ENCODE measurements at regions of chr10 and their contacts with region 1.

Region 1: GRCh38 chr10:33155720-33156638 is 178.5 kb downstream of the NRP1 start:
- DNase-seq: peak; percentile 53
- H3K4me3 Mint-ChIP-seq: no peak overlapping the region
- H3K27ac Mint-ChIP-seq: peak overlapping the region; percentile 59
- H3K4me1 Mint-ChIP-seq: peaks cover 53% of the 10 kb centered on the region
- H3K27me3 Mint-ChIP-seq: no peaks in the 10 kb centered on the region

Region 2: DNA sequence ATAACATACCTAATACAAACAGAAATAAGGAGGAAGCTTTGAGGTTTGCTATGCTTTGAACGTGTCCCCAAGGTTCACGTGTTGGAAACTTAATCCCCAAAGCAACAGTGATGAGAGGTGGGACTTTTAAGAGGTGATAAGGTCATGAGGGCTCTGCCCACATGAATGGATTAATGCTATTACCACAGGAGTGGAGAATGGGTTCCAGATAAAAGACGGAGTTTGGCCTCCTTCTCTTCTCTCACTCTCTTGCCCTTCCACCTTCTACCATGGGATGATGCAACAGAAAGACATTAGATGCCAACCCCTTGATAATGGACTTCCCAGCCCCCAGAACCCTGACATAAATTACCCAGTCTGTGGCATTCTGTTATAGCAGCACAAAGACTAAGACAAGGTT is 207.5 kb before region 1 on chr10:
- CTCF ChIA-PET with region 1: no interaction called
- POLR2A ChIA-PET with region 1: no interaction called
- DNase-seq: no peak
- H3K4me3 Mint-ChIP-seq: peak overlapping the region; percentile 5
- H3K27ac Mint-ChIP-seq: peak overlapping the region; percentile 4
- H3K4me1 Mint-ChIP-seq: peaks cover 75% of the 10 kb centered on the region
- H3K27me3 Mint-ChIP-seq: no peaks in the 10 kb centered on the region

Region 3: DNA sequence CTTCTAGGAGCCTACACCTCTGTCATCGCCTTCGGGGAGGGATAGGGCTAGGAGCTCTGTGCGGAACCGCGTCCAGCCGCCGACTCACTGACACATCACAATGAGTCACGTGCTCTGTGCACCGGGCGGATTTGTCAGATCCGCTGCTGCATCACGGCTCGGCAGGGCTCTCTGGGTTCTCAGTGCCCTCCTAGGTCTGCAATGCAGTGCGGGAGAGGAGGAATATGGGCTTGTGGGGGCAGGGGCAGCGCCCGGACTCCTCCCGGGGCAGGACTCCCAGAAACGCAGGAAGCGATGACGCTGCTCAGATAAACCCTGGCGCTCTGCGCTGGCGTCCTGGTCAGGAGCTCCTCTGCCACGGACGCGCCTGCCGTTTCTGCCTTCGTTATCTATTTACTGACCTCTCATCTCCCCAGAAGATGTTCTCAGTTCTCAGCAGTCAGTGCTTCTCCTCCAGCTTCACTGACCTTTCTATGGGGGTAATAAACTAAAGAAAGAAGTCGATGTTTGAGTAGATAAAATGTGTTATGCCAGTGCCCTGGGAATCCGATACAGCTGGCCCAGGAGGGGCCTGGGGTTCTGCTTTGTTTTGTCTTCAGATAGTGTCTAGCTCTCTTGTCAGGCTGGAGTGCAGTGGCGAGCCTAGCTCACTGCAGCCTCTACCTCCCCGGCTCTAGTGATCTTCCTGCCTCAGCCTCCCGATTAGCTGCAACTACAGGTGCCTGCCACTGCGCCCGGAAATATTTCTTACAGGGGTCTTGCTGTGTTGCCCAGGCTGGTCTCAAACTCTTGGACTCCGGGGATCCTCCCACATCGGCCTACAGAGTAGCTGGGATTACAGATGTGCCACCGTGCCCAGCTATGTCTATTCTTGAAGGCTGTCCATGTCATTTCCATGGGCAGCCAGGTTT is 175.2 kb before region 1 on chr10:
- CTCF ChIA-PET with region 1: interaction called, 12 read pairs
- POLR2A ChIA-PET with region 1: interaction called, 18 read pairs
- DNase-seq: peak; percentile 89
- H3K4me3 Mint-ChIP-seq: peak overlapping the region; percentile 88
- H3K27ac Mint-ChIP-seq: peak overlapping the region; percentile 93
- H3K4me1 Mint-ChIP-seq: peaks cover 42% of the 10 kb centered on the region
- H3K27me3 Mint-ChIP-seq: no peaks in the 10 kb centered on the region

Region 4: DNA sequence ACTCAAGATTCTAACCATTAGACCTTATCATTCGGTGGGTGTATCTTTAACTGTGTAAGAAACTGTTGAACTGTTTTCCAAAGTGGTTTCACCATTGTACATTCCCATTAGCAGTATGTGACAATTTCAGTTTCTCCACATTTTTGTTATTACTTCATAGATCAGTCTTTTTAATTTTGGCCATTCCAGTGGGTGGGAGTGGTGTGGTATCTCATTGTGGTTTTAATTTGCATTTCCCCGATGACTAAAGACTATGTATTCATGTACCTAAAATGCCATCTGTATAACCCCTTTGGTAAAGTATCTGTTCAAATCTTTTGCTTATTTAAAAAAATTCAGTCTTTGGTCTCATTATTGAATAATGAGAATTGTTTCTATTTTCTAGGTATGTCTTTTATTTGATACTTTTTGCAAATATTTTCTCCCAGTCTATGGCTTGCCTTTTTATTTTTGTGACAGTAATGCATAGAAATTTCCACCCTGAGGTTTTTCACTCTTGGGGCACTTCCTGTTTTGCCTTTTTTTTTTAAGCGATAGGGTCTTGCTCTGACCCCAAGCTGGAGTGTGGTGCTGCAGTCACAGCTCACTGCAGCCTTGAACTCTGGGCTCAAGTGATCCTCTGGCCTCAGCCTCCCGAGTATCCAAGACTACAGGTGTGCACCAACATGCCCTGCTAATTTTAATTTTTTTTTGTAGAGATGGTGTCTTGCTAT is 56.9 kb before region 1 on chr10:
- CTCF ChIA-PET with region 1: interaction called, 12 read pairs
- POLR2A ChIA-PET with region 1: interaction called, 20 read pairs
- DNase-seq: no peak
- H3K4me3 Mint-ChIP-seq: peak overlapping the region; percentile 11
- H3K27ac Mint-ChIP-seq: peak overlapping the region; percentile 89
- H3K4me1 Mint-ChIP-seq: peaks cover 66% of the 10 kb centered on the region
- H3K27me3 Mint-ChIP-seq: no peaks in the 10 kb centered on the region

Region 5: DNA sequence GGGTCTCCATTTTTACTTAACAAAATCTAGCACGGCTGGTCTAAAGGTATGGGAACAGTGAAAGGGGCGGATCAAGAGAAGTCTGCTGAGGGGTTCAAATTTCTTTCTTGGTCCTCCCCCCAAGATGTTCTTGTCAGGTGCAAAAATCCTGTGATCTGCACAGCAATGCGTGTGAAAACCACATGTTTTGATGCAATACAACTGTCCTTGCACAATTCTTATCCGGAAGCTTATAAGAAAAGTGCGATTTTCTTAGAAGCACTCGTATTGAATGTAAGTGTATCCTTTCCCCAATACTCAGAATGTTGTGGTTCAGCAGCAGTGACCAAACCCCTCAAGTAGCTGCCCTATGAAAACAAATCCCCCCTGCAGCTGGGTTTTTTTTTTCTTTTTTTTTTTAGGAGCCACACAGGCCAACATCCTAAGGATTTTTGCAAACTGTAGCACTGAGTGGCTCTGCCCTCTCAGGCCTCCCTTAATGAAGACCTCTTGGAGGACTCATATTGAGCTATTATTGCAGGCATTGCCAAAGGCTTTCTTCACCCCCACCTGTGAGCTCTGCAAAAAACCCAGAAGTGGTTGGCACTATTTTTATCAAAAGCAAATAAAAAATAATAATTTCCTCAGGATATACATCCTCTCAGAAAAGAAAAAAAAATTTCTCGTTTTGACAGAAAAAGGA is 46.0 kb before region 1 on chr10:
- CTCF ChIA-PET with region 1: interaction called, 43 read pairs
- POLR2A ChIA-PET with region 1: interaction called, 97 read pairs
- DNase-seq: peak; percentile 50
- H3K4me3 Mint-ChIP-seq: peak overlapping the region; percentile 59
- H3K27ac Mint-ChIP-seq: peak overlapping the region; percentile 84
- H3K4me1 Mint-ChIP-seq: peaks cover 95% of the 10 kb centered on the region
- H3K27me3 Mint-ChIP-seq: no peaks in the 10 kb centered on the region

Region 6: GRCh38 chr10:33125522-33126517 is 30.2 kb before region 1 on chr10:
- CTCF ChIA-PET with region 1: interaction called, 4 read pairs
- POLR2A ChIA-PET with region 1: interaction called, 97 read pairs
- DNase-seq: peak; percentile 62
- H3K4me3 Mint-ChIP-seq: peak overlapping the region; percentile 18
- H3K27ac Mint-ChIP-seq: peak overlapping the region; percentile 94
- H3K4me1 Mint-ChIP-seq: peaks cover 87% of the 10 kb centered on the region
- H3K27me3 Mint-ChIP-seq: no peaks in the 10 kb centered on the region

Region 7: GRCh38 chr10:33134011-33134751 is 21.8 kb before region 1 on chr10:
- CTCF ChIA-PET with region 1: interaction called, 16 read pairs
- POLR2A ChIA-PET with region 1: interaction called, 150 read pairs
- DNase-seq: peak; percentile 84
- H3K4me3 Mint-ChIP-seq: no peak overlapping the region
- H3K27ac Mint-ChIP-seq: peak overlapping the region; percentile 90
- H3K4me1 Mint-ChIP-seq: peaks cover 91% of the 10 kb centered on the region
- H3K27me3 Mint-ChIP-seq: no peaks in the 10 kb centered on the region

Region 8: DNA sequence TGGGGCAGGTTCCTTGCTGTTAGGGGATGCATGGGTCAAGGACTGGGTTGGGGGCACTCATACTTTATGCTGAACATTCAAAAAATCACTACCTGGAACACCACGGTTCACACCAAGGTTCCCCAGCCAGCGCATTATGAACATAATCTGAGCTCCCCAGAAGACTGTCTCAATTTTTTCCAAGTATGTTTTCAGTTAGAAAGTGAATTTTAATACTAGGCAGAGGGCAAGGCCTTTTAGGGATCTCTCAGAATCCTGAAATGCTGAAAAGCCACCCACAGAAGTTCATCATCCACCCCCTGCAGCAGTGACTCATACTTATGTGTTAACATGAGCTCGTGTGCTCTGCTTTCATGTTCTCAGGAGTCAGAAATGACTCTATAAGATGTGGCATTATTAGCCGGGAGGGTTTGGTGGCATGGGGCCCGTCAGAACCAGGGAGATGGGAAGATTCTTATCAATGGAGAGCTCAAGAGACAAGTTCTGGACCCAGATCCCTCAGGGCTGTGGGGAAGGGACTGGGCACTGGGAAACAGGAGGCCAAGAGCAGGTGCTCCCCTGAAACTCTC is 12.7 kb before region 1 on chr10:
- CTCF ChIA-PET with region 1: interaction called, 9 read pairs
- POLR2A ChIA-PET with region 1: interaction called, 150 read pairs
- DNase-seq: peak; percentile 52
- H3K4me3 Mint-ChIP-seq: no peak overlapping the region
- H3K27ac Mint-ChIP-seq: peak overlapping the region; percentile 72
- H3K4me1 Mint-ChIP-seq: peaks cover 55% of the 10 kb centered on the region
- H3K27me3 Mint-ChIP-seq: no peaks in the 10 kb centered on the region